ENCODE measurements at regions of chr1 and their contacts with region 1.

Region 1: GRCh38 chr1:173824331-173825081 is at the starts of genes CENPL and DARS2:
- DNase-seq: peak; percentile 91 to 98
- ATAC-seq: peak; percentile 96
- H3K4me3 ChIP-seq: peak within 1 kb of the TSS; percentile 74
- H3K27ac ChIP-seq: peak within 1 kb of the TSS; percentile 90 to 92
- H3K4me1 ChIP-seq: peaks cover 16% of the 10 kb centered on the region; the same call in 1 of the 3 replicates
- CTCF ChIP-seq: no peak
- EP300 ChIP-seq: no peak
- POLR2A ChIP-seq: peak; percentile 51
- RAD21 ChIP-seq: no peak
- polyA plus RNA-seq, gene CENPL: 15.6 and 20.2 TPM in 2 replicates
- polyA plus RNA-seq, gene DARS2: 67.0 and 70.4 TPM in 2 replicates

Region 2: DNA sequence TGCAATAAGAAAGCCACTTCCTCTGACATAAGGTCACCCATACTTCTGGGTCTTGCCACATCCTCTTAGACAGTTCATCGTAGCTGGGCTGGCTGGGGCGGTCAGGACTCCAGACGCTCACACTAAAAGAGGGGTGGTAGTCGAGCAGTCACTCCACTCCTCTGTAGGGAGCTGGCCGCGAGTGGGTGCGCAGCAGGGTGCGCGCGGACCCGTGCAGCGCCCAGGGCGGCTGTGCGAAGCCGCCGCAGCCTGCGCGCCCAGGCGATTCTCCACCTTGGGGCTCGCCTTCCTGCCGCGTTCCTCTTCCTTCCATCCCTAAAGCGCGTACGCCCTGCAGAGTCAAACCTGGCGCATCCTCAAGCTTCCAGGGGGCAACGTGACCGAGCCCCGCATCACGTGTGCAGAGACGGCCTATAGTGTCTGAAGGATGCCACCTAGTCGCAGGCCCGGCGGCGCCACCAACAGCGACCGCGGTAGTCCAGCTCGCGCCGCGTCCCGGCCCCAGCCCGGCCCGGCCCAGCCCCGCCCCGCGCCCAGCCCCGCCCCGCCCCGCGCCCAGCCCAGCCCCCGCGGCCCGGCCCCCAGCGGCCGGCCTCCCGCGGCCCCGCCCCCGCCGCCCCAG is 347.7 kb before region 1 on chr1:
- CTCF ChIA-PET with region 1: interaction called, 3 read pairs
- POLR2A ChIA-PET with region 1: interaction called, 15 read pairs
- DNase-seq: peak; percentile 91 to 93
- ATAC-seq: peak; percentile 92 to 93
- H3K4me3 ChIP-seq: peak overlapping the region; percentile 90
- H3K27ac ChIP-seq: peak overlapping the region; percentile 91 to 98
- H3K4me1 ChIP-seq: peaks cover 42% of the 10 kb centered on the region
- CTCF ChIP-seq: no peak
- EP300 ChIP-seq: no peak
- POLR2A ChIP-seq: peak; percentile 57
- RAD21 ChIP-seq: no peak

Region 3: GRCh38 chr1:174209347-174210187 is 385.1 kb after region 1 on chr1:
- CTCF ChIA-PET with region 1: no interaction called
- POLR2A ChIA-PET with region 1: no interaction called
- DNase-seq: no peak
- ATAC-seq: no peak
- H3K4me3 ChIP-seq: no peak overlapping the region
- H3K27ac ChIP-seq: no peak overlapping the region
- H3K4me1 ChIP-seq: no peaks in the 10 kb centered on the region
- CTCF ChIP-seq: no peak
- EP300 ChIP-seq: no peak
- POLR2A ChIP-seq: no peak
- RAD21 ChIP-seq: no peak